CD4-positive, alpha-beta T cell (primary cell): ENCODE measurements at regions of chr14 and their contacts with region 1.

Region 1: DNA sequence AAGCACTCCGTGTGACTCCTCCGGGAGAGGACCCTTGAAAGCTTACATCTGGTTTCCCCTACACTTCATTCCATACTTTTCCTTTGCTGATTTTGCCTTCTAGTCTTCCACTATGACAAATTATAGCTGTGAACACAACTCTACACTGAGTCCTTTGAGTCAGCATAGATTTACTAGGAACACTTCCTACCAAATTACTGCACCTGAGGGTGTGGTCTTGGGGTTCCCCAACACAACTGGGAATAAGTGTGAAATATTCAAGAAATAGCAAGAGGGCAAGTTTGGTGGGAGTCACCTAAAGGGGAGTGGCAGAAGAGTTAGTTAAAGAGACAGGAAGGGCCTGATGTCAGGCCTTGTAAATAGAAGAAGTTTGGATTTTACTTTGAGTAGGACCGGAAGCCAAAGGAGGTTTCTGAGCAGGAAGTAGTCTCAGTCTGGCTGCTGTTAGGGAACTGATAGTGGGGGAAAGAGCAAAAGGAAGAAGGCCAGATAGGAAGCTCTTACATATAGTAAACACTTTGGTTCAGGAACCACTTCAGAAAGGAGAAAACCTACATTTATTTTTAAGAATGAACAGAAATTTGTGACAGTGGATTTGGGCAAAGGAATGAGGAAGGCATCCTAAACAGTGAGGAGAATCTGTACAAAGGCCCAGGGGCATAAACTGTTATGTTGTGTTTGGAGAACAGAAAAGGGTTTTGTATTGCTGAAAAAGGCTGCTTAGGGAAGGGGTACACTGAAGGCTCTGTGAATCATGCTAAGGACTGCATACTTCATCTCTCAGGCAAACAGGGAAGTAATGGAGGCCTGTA is 14.2 kb downstream of the SEL1L start:
- DNase-seq: peak in 3 of 14 experiments; percentile 38 to 44 (median 42)
- ATAC-seq: peak; percentile 56
- H3K4me3 ChIP-seq: no peak overlapping the region
- H3K4me3 Mint-ChIP-seq: peak overlapping the region; percentile 6
- H3K27ac ChIP-seq: peak overlapping the region; percentile 37 to 42
- H3K27ac Mint-ChIP-seq: peak overlapping the region; percentile 81
- H3K4me1 ChIP-seq: peaks cover 13% of the 10 kb centered on the region
- H3K4me1 Mint-ChIP-seq: peaks cover 52% of the 10 kb centered on the region
- H3K27me3 ChIP-seq: no peaks in the 10 kb centered on the region
- H3K27me3 Mint-ChIP-seq: no peaks in the 10 kb centered on the region
- CTCF ChIP-seq: no peak

Region 2: DNA sequence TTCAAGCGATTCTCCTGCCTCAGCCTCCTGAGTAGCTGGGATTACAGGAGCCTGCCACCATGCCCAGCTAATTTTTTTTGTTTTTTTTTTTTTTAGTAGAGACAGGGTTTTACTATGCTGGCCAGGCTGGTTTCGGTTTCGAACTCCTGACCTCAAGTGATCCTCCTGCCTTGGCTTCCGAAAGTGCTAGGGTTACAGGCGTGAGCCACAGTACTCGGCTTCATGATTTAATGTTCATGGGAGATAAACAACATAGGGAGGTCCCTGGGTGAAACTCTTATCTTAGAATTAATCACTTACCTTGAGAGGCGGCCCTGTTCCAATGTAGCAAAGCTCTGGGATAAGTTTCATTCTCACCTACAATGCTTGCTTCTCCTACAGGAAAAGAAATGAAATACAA is 34.0 kb before region 1 on chr14:
- CTCF ChIA-PET with region 1: no interaction called
- POLR2A ChIA-PET with region 1: interaction called, 3 read pairs
- intact Hi-C with region 1: loop called in 1 of 2 experiments (anchors 5 kb)
- DNase-seq: peak in 3 of 14 experiments; percentile 45 to 62 (median 61)
- ATAC-seq: no peak
- H3K4me3 ChIP-seq: no peak overlapping the region
- H3K4me3 Mint-ChIP-seq: no peak overlapping the region
- H3K27ac ChIP-seq: no peak overlapping the region
- H3K27ac Mint-ChIP-seq: peak overlapping the region; percentile 66
- H3K4me1 ChIP-seq: no peaks in the 10 kb centered on the region
- H3K4me1 Mint-ChIP-seq: no peaks in the 10 kb centered on the region
- H3K27me3 ChIP-seq: no peaks in the 10 kb centered on the region
- H3K27me3 Mint-ChIP-seq: no peaks in the 10 kb centered on the region
- CTCF ChIP-seq: no peak